ENCODE measurements at regions of chr20 and their contacts with region 1.

Region 1: DNA sequence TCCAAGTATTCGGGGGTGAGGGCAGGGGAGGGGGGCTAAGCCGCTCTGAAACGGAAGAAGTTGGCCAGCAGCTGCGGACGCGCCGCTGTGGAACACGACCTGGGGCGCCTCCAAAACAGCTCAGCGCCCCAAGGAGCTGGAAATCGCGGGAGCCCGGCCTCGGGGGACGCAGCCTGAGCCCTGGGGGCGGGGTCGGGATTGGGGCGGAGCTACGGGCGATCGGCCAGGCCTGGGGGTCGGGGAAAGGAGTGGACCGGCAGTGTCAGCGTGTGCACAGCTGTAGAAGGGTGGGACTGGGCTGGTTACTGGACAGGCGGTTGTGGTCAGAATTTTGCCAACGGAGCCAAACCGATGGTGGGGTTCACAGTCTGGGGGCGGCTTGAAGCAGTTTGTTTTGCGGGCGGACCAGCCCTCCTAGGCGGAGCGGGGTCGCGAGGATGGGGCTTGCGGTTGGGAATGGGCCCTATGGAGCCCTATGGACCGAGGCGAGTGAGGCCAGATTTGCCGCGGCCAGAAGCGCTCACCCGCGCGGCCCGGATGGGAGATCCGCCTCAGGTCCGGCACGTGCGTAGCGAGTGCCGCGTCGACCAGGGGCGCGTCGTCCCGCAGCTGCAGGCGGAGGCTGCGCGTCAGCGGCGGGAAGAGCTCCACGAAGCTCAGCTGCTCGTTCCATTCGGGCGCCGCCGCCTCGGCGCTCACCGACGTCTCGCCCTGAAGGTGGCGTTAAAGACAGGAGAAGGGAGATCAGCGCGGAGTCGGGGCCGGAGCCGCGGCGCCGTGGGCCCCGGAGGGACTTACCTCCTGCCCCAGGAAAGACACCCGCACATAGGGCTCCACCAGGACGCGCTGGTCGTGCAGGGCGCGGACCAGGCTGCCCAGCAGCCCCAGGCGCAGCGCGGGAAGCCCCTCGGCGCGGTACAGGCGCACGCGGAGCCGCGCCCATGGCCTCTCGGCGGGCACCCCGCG is 14.3 kb upstream of the SPAG4 start:
- DNase-seq: peak; percentile 64 to 72
- ATAC-seq: peak; percentile 89 to 92
- H3K4me3 ChIP-seq: peak overlapping the region; percentile 52 to 65 (median 58)
- H3K27ac ChIP-seq: peak overlapping the region in 1 of 4 donors; percentile 15
- H3K4me1 ChIP-seq: peaks cover 6 to 10% of the 10 kb centered on the region in 2 donors
- H3K27me3 ChIP-seq: peaks cover 4 to 12% (median 11%) of the 10 kb centered on the region in 3 donors
- CTCF ChIP-seq: peak in 4 of 5 experiments; percentile 39 to 68 (median 52)
- POLR2A ChIP-seq: no peak

Region 2: DNA sequence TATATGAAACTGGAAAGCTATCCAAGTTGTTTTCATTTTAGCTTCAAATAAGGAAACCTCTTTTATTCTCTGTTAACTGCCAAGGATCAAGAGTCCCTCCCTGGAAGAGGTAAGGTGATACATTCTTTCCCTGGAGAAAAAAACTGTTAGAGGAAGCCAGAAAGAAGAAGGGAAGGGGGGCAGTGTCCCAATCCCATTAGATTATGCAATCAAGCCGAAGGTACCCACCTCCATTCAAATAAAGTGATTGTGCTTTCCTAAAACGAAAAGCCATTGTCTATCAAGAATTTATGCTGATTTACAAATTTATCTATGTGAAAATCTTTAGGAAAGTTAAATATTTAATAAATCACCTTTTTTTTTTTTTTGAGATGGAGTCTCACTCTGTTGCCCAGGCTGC is 180.0 kb before region 1 on chr20:
- in situ Hi-C with region 1: no loop called
- intact Hi-C with region 1: no loop called
- DNase-seq: no peak
- ATAC-seq: no peak
- H3K4me3 ChIP-seq: no peak overlapping the region
- H3K27ac ChIP-seq: no peak overlapping the region
- H3K4me1 ChIP-seq: no peaks in the 10 kb centered on the region
- H3K27me3 ChIP-seq: no peaks in the 10 kb centered on the region
- CTCF ChIP-seq: no peak
- POLR2A ChIP-seq: no peak

Region 3: DNA sequence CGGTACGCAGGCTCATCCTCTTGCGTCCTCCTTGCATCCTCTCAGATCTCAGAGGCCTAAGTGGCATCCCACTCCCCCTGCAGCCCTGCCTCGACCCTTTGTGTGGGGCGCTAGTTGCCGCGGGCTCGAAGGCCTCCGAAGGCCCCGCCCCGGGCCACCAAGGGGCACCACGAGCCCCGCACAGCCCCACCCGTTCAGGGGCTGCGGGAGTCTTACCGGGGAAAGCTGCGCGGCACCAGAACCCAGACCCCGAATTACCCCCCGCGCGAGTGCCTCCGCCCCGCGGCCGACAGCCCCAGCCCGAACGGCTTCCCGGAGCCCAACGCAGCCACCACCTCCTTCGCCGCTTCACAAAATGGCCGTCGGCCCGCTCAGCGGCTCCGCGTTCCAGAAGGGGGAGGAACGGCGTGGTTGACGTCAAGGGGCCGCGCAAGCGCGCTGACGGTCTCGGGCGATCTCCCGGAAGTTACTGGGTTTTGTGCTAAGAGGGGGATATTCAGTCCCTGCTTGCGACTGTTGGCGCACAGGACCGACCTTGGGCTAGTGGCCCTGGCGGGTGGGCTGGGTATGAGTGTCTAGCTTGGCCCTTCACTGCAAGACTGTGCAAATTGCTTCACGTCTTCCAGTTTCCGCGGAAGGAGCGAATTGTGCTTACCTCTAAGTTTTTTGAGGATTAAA is 63.4 kb after region 1 on chr20 and contains the starts of genes CPNE1 and RBM12:
- in situ Hi-C with region 1: no loop called
- intact Hi-C with region 1: loop called (anchors 5 kb)
- DNase-seq: peak; percentile 87 to 90
- ATAC-seq: peak; percentile 93 to 95
- H3K4me3 ChIP-seq: peak within 1 kb of the TSS; percentile 73 to 97 (median 74)
- H3K27ac ChIP-seq: peak within 1 kb of the TSS; percentile 93 to 98 (median 98)
- H3K4me1 ChIP-seq: peaks cover 35 to 41% of the 10 kb centered on the region in 2 donors
- H3K27me3 ChIP-seq: no peaks in the 10 kb centered on the region
- CTCF ChIP-seq: no peak
- POLR2A ChIP-seq: peak; percentile 91 to 92
- total RNA-seq, gene CPNE1: 37.3 to 60.7 (median 50.1) TPM
- total RNA-seq, gene RBM12: 9.8 to 23.7 (median 20.7) TPM

Region 4: DNA sequence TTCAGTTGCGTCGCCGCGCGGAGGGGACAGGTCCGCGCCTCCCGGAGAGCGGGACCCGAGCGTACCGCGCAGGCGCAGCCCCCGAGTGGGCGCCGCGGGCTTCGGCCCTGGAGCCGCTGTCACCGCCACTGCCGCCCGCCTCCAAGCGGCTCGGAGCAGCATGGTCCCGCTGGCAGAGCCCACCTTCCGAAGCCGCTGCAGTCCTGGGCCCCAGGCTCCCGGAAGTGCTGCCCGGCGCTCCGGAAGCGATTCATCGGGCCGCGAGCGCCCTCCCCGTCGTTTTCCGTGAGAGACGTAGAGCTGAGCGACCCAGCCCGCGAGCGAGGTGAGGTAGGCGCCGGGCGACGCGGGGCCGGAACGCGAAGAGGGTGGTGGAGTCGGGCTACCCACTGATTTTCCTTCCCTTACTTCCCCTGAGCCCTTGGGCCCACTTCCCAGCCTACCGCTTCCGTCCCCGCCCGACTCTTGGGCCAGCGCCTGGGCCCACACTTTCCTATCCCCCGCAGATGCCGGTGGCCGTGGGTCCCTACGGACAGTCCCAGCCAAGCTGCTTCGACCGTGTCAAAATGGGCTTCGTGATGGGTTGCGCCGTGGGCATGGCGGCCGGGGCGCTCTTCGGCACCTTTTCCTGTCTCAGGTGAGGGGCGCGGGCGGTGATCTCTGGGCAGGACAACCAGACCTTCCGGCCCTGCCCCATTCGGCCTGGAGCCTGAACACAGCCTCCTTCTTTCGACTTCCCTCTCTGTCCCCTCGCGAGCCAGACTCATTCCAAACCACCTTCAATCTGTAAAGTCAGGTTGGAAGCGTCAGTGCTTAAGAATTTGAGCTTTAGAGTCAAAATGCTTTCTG is 98.1 kb after region 1 on chr20 and contains the starts of genes NFS1 and ROMO1:
- in situ Hi-C with region 1: no loop called
- intact Hi-C with region 1: loop called (anchors 1 kb)
- DNase-seq: peak; percentile 69 to 86
- ATAC-seq: peak; percentile 88 to 90
- H3K4me3 ChIP-seq: peak within 1 kb of the TSS; percentile 85 to 95 (median 92)
- H3K27ac ChIP-seq: peak within 1 kb of the TSS; percentile 88 to 97 (median 96)
- H3K4me1 ChIP-seq: peaks cover 28 to 40% of the 10 kb centered on the region in 2 donors
- H3K27me3 ChIP-seq: no peaks in the 10 kb centered on the region
- CTCF ChIP-seq: peak; percentile 5 to 35 (median 25)
- POLR2A ChIP-seq: peak; percentile 60 to 84
- total RNA-seq, gene NFS1: 31.5 to 85.8 (median 37.2) TPM
- total RNA-seq, gene ROMO1: 213 to 491 (median 309) TPM

Region 5: DNA sequence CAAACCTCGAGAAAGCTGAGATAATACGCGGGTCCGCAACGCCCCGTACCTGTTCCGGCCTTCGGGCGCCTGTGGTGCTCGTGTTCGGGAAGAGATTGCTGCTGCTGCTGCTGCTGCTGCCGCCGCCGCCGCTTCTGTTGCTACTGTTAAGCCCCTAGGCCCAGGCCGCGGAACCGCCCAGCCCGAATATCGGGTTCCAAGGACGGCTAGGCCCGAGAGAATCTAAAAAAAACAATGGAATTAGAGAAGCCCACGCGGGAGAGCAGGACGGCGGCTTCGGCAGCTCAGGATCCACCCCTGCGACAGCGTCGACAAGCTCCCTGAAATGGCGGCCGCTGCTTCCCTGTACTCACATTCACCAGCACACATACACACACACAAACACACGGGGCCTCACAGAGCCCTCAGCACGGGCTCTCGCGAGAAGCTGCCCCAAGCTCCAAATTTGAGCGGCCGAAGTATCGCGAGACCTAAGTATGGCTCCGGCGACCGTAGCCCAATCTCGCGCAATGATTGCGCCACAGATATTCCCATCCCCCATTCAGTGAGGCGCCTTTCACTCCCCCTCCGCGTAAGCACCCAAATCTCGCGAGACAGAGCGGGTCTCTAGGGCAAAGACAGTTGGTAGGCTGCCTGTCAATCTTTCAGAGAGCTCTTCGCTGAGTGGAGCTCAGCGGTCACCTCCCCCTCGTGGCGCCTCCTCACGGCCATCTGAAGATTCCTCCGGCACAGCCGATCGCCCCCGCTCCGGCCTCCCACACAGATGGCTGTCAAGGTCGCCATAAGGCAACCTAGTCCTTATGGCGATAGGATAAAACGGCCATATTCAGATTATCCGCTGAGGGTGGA is 140.8 kb after region 1 on chr20 and contains the start of gene RBM39:
- in situ Hi-C with region 1: no loop called
- intact Hi-C with region 1: loop called (anchors 5 kb)
- DNase-seq: peak; percentile 100
- ATAC-seq: peak; percentile 91 to 95
- H3K4me3 ChIP-seq: peak within 1 kb of the TSS; percentile 80 to 96 (median 88)
- H3K27ac ChIP-seq: peak within 1 kb of the TSS; percentile 96 to 100 (median 98)
- H3K4me1 ChIP-seq: peaks cover 37 to 39% of the 10 kb centered on the region in 2 donors
- H3K27me3 ChIP-seq: no peaks in the 10 kb centered on the region
- CTCF ChIP-seq: peak; percentile 28 to 48 (median 39)
- POLR2A ChIP-seq: peak; percentile 97 to 98
- total RNA-seq, gene RBM39: 98.5 to 165 (median 130) TPM

Region 6: GRCh38 chr20:35954200-35954906 is 353.1 kb after region 1 on chr20 and contains the start of gene SCAND1:
- in situ Hi-C with region 1: no loop called
- intact Hi-C with region 1: loop called (anchors 5 kb)
- DNase-seq: peak; percentile 90 to 94
- ATAC-seq: peak; percentile 88 to 89
- H3K4me3 ChIP-seq: peak within 1 kb of the TSS; percentile 91 to 98 (median 96)
- H3K27ac ChIP-seq: peak within 1 kb of the TSS; percentile 92 to 99 (median 96)
- H3K4me1 ChIP-seq: peaks cover 22 to 27% of the 10 kb centered on the region in 2 donors
- H3K27me3 ChIP-seq: no peaks in the 10 kb centered on the region
- CTCF ChIP-seq: peak; percentile 90 to 97 (median 94)
- POLR2A ChIP-seq: peak; percentile 83 to 87
- total RNA-seq, gene SCAND1: 88.3 to 138 (median 118) TPM